Activated CD4-positive, alpha-beta T cell treated with anti-CD3 and anti-CD28 coated beads, Interleukin-2, amount 10 ng/mL, durations not matched to agents 24 days and 14 days (primary cell): ENCODE measurements at regions of chr12 and their contacts with region 1.

Region 1: GRCh38 chr12:57836442-57837375 is 9.8 kb downstream of the CTDSP2 start:
- DNase-seq: peak; percentile 81
- H3K4me3 Mint-ChIP-seq: peak overlapping the region; percentile 67
- H3K27ac Mint-ChIP-seq: peak overlapping the region; percentile 93
- H3K4me1 Mint-ChIP-seq: peaks cover 74% of the 10 kb centered on the region
- H3K27me3 Mint-ChIP-seq: no peaks in the 10 kb centered on the region

Region 2: GRCh38 chr12:57583008-57583831 is 253.5 kb before region 1 on chr12:
- intact Hi-C with region 1: no loop called
- DNase-seq: peak; percentile 92
- H3K4me3 Mint-ChIP-seq: no peak overlapping the region
- H3K27ac Mint-ChIP-seq: no peak overlapping the region
- H3K4me1 Mint-ChIP-seq: peaks cover 3% of the 10 kb centered on the region
- H3K27me3 Mint-ChIP-seq: peaks cover 10% of the 10 kb centered on the region

Region 3: GRCh38 chr12:57852620-57853500 is 16.2 kb after region 1 on chr12:
- intact Hi-C with region 1: no loop called
- DNase-seq: no peak
- H3K4me3 Mint-ChIP-seq: no peak overlapping the region
- H3K27ac Mint-ChIP-seq: no peak overlapping the region
- H3K4me1 Mint-ChIP-seq: peaks cover 8% of the 10 kb centered on the region
- H3K27me3 Mint-ChIP-seq: peaks cover 50% of the 10 kb centered on the region

Region 4: GRCh38 chr12:57865090-57865751 is 28.5 kb after region 1 on chr12:
- intact Hi-C with region 1: loop called (anchors 5 kb)
- DNase-seq: peak; percentile 85
- H3K4me3 Mint-ChIP-seq: peak overlapping the region; percentile 77
- H3K27ac Mint-ChIP-seq: peak overlapping the region; percentile 71
- H3K4me1 Mint-ChIP-seq: peaks cover 9% of the 10 kb centered on the region
- H3K27me3 Mint-ChIP-seq: peaks cover 15% of the 10 kb centered on the region

Region 5: GRCh38 chr12:57904848-57905811 is 68.4 kb after region 1 on chr12:
- intact Hi-C with region 1: loop called (anchors 1 kb)
- DNase-seq: peak; percentile 95
- H3K4me3 Mint-ChIP-seq: peak overlapping the region; percentile 53
- H3K27ac Mint-ChIP-seq: peak overlapping the region; percentile 32
- H3K4me1 Mint-ChIP-seq: peaks cover 6% of the 10 kb centered on the region
- H3K27me3 Mint-ChIP-seq: peaks cover 35% of the 10 kb centered on the region

Region 6: DNA sequence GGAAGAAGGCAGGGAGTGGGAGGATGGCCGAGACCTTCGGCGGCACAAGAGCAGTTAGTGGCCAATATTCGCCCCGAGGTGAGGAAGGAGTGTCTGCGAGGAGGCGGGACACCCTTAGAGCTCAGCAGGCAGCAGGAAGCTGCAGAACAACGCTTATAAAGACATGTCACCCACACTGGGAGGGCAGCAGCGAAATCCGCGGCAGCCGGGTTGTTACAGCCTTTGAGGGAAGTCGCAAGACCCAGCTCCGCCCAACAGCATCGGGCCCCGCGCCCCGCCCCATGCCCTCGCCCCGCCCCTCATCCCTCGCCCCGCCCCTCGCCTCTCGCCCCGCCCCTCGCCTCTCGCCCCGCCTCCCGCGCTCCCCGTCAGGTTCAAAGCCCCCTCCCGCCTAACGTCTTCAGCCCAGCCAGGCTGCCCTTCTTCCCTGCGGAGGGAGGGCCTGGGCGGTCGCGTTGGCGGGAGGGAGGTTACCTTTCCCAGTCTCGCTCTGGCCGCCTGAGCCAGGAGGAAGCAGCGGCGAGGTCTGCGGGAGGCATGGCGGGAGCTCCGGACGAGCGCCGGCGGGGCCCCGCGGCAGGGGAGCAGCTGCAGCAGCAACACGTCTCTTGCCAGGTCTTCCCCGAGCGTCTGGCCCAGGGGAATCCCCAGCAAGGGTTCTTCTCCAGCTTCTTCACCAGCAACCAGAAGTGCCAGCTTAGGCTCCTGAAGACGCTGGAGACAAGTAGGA is 104.6 kb after region 1 on chr12 and contains the start of gene ATP23:
- intact Hi-C with region 1: loop called (anchors 2 kb)
- DNase-seq: peak; percentile 97
- H3K4me3 Mint-ChIP-seq: peak within 1 kb of the TSS; percentile 91
- H3K27ac Mint-ChIP-seq: peak within 1 kb of the TSS; percentile 97
- H3K4me1 Mint-ChIP-seq: peaks cover 36% of the 10 kb centered on the region
- H3K27me3 Mint-ChIP-seq: no peaks in the 10 kb centered on the region
- total RNA-seq, gene ATP23: 8.3 and 10.7 TPM in 2 replicates